ENCODE measurements at regions of chr10 and their contacts with region 1.

Region 1: GRCh38 chr10:86968271-86968993 is at the start of gene ADIRF:
- DNase-seq: no peak
- ATAC-seq: no peak
- H3K4me3 ChIP-seq: no peak within 1 kb of the TSS
- H3K27ac ChIP-seq: peak within 1 kb of the TSS; percentile 88; the same call in 1 of the 2 replicates
- H3K4me1 ChIP-seq: peaks cover 54% of the 10 kb centered on the region
- H3K27me3 ChIP-seq: peaks cover 0 to 2% of the 10 kb centered on the region in 2 experiments; a peak in 1 of 4 replicates
- CTCF ChIP-seq: no peak
- EP300 ChIP-seq: no peak
- POLR2A ChIP-seq: no peak
- RAD21 ChIP-seq: no peak
- polyA plus RNA-seq, gene ADIRF: 0.77 to 0.98 TPM

Region 2: GRCh38 chr10:86936661-86937501 is 31.6 kb before region 1 on chr10:
- CTCF ChIA-PET with region 1: interaction called, 25 read pairs
- POLR2A ChIA-PET with region 1: no interaction called
- RAD21 ChIA-PET with region 1: interaction called, 5 read pairs
- SMC1A ChIA-PET with region 1: interaction called, 8 read pairs
- in situ Hi-C with region 1: no loop called
- intact Hi-C with region 1: loop called (anchors 1 kb)
- DNase-seq: no peak
- ATAC-seq: no peak
- H3K4me3 ChIP-seq: no peak overlapping the region
- H3K27ac ChIP-seq: no peak overlapping the region
- H3K4me1 ChIP-seq: no peaks in the 10 kb centered on the region; the same call in 1 of the 2 replicates
- H3K27me3 ChIP-seq: no peaks in the 10 kb centered on the region
- CTCF ChIP-seq: no peak
- EP300 ChIP-seq: no peak
- POLR2A ChIP-seq: no peak
- RAD21 ChIP-seq: no peak

Region 3: DNA sequence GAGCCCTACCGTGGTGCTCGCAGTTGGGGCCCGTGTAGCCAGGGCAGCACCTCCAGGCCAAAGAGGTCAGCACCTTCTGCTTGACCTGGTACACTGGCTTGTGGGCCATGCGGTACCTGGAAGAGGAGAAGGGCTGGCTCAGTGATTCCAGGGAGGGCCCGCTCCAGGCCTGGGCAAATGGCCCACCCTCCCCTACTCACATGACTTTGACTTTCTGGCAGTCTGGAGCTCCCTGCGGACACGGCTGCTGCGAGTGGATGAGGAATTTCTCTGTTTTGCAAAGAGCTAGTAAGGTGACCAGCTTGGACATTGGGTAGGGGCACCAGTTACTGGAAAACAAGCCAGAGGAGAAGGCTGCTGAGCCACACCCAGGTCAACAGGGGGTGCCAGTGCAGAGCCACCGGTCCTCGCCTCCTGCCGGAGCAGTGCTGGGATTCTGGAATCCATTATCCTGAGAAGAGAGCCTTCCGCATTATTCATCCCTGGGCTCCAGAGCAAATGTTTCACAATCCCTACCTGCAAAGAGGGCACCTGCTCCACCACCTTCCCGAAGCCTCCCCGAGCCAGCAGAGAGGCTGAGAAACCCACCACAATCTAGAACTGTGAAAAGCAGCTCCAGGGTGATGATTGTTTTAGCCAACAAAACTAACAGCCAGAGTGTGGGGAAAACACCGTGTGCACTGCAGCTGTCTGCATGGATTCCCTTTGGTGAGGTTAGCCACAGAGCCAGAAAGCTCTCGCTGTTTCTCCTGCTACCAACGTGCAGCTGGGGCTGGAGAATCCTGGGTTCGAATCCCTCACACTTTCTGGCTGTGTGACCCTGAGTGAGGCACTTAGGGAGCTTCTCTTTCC is 22.8 kb before region 1 on chr10:
- CTCF ChIA-PET with region 1: interaction called, 25 read pairs
- POLR2A ChIA-PET with region 1: interaction called, 3 read pairs
- RAD21 ChIA-PET with region 1: interaction called, 5 read pairs
- SMC1A ChIA-PET with region 1: no interaction called
- in situ Hi-C with region 1: no loop called
- intact Hi-C with region 1: no loop called
- DNase-seq: no peak
- ATAC-seq: no peak
- H3K4me3 ChIP-seq: no peak overlapping the region
- H3K27ac ChIP-seq: no peak overlapping the region
- H3K4me1 ChIP-seq: no peaks in the 10 kb centered on the region
- H3K27me3 ChIP-seq: no peaks in the 10 kb centered on the region
- CTCF ChIP-seq: 0 out of 6 replicates have a peak, but pooled peaks of 1 of the 3 experiments have one; percentile 2
- EP300 ChIP-seq: no peak
- POLR2A ChIP-seq: no peak
- RAD21 ChIP-seq: no peak

Region 4: GRCh38 chr10:87094373-87095235 is 126.2 kb after region 1 on chr10 and contains the starts of genes GLUD1 and SHLD2:
- CTCF ChIA-PET with region 1: interaction called, 7 read pairs
- POLR2A ChIA-PET with region 1: interaction called, 9 read pairs
- RAD21 ChIA-PET with region 1: interaction called, 8 read pairs
- SMC1A ChIA-PET with region 1: interaction called, 4 read pairs
- in situ Hi-C with region 1: no loop called
- intact Hi-C with region 1: loop called (anchors 5 kb)
- DNase-seq: peak; percentile 54
- ATAC-seq: peak; percentile 67
- H3K4me3 ChIP-seq: peak within 1 kb of the TSS; percentile 88
- H3K27ac ChIP-seq: peak within 1 kb of the TSS; percentile 90
- H3K4me1 ChIP-seq: no peaks in the 10 kb centered on the region; the same call in 1 of the 2 replicates
- H3K27me3 ChIP-seq: no peaks in the 10 kb centered on the region
- CTCF ChIP-seq: peak in 1 of 3 experiments; percentile 11; a peak in 1 of 6 replicates
- EP300 ChIP-seq: no peak
- POLR2A ChIP-seq: peak; percentile 83
- RAD21 ChIP-seq: no peak
- polyA plus RNA-seq, gene GLUD1: 26.1 to 29.5 TPM
- polyA plus RNA-seq, gene SHLD2: 24.5 to 29.4 TPM